Ovary (tissue), 10 donors: ENCODE measurements at regions of chr1 and their contacts with region 1.

Region 1: DNA sequence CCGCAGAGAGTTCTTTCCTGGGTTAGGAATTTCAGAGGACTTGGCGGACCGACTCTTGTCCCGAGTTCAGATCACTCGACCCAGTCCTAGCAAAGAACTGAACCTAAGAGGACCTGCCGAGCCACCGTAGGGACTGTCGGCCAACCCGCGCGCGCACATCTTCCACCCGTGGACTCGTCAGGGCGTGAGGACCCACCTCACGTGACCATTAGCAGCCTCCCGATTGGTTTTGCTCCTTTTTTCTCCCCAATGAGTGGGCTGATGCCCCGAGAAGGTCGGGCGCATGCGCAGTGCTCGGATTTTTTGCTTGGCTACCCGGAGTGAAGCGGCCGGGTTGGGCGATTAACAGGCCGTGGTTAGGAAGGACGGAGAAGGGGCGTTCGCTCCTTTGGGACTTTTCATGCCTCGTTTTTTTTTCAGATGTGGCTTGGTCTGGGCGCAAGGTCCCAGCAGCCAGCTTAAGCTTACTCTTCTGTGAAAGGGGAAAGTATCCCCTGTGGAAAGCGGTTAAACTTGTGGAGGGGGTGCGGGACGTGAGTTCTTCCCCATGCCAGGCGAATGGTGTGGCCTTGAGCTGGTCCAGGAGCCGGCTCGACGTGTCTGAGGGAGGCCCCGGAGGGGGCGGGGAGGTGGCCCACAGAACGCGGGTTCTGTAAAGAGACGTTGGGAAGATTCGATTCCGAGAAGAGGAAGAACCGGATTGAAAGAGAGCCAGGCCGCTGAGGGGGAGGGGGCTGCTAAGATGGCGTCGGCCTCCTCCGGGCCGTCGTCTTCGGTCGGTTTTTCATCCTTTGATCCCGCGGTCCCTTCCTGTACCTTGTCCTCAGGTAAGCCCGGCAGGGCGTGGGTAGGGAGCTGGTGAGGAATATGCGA is at the start of gene PIP5K1A:
- DNase-seq: peak; percentile 98 to 100 (median 99)
- H3K4me3 ChIP-seq: peak within 1 kb of the TSS; percentile 76
- H3K27ac ChIP-seq: peak within 1 kb of the TSS; percentile 49 to 81
- H3K4me1 ChIP-seq: peaks cover 6% of the 10 kb centered on the region
- H3K27me3 ChIP-seq: no peaks in the 10 kb centered on the region
- CTCF ChIP-seq: no peak
- EP300 ChIP-seq: no peak
- POLR2A ChIP-seq: peak; percentile 84
- total RNA-seq, gene PIP5K1A: 33.0 to 62.8 (median 47.5) TPM

Region 2: GRCh38 chr1:151175910-151176309 is 22.6 kb before region 1 on chr1 and contains the start of gene TMOD4:
- intact Hi-C with region 1: no loop called
- DNase-seq: peak in 1 of 5 donors; percentile 32
- H3K4me3 ChIP-seq: no peak within 1 kb of the TSS
- H3K27ac ChIP-seq: no peak within 1 kb of the TSS
- H3K4me1 ChIP-seq: no peaks in the 10 kb centered on the region
- H3K27me3 ChIP-seq: no peaks in the 10 kb centered on the region
- CTCF ChIP-seq: no peak
- EP300 ChIP-seq: no peak
- POLR2A ChIP-seq: no peak
- total RNA-seq, gene TMOD4: 0.42 to 1.4 (median 0.88) TPM in 5 of 7 donors, not detected in the others

Region 3: DNA sequence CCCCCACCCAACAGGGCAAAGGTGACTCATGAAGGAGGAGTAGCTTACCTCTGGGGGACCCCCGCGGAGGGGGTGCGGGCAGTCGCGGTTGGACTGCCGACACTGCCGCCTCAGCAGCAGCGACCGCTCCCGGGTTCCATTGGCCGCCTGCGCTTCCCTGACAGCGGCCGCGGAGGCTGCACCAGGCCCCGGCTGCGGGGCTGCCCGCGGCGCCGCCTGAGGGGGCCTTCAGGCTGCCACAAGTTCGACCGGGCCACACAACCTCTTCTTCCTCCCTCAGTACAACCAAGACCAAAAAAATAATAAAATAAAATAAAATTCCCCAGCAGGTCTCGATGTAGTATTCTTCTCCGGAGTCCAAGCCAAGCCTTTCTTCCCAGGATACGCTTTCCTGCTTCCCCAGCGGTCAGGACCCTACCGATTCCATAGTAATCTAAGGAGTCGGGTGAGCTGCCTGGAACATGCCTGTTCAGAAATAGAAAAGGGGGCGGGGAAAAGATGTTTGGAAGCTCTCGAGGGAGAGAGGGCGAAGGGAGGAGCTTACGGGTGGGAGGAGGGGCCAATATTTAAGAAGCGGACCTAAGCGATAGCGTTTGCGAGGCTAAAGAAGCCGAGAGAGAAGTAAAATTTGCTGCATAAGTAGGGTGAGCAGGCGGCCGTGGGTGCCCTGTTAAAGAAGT is 128.9 kb after region 1 on chr1 and contains the start of gene PI4KB:
- intact Hi-C with region 1: loop called in 1 of 4 experiments (anchors 10 kb)
- DNase-seq: peak; percentile 87 to 93 (median 88)
- H3K4me3 ChIP-seq: peak within 1 kb of the TSS; percentile 94
- H3K27ac ChIP-seq: peak within 1 kb of the TSS; percentile 31 to 89
- H3K4me1 ChIP-seq: peaks cover 3% of the 10 kb centered on the region
- H3K27me3 ChIP-seq: no peaks in the 10 kb centered on the region
- CTCF ChIP-seq: no peak
- EP300 ChIP-seq: no peak
- POLR2A ChIP-seq: peak; percentile 38
- total RNA-seq, gene PI4KB: 39.8 to 88.9 (median 63.8) TPM

Region 4: GRCh38 chr1:152034646-152035405 is 836.3 kb after region 1 on chr1:
- intact Hi-C with region 1: no loop called
- DNase-seq: peak in 2 of 5 donors; percentile 31 to 52
- H3K4me3 ChIP-seq: peak overlapping the region; percentile 63
- H3K27ac ChIP-seq: peak overlapping the region in 1 of 2 donors; percentile 85
- H3K4me1 ChIP-seq: peaks cover 3% of the 10 kb centered on the region
- H3K27me3 ChIP-seq: no peaks in the 10 kb centered on the region
- CTCF ChIP-seq: peak in 1 of 3 donors; percentile 16
- EP300 ChIP-seq: no peak
- POLR2A ChIP-seq: no peak